ENCODE measurements at regions of chr2 and their contacts with region 1.

Region 1: DNA sequence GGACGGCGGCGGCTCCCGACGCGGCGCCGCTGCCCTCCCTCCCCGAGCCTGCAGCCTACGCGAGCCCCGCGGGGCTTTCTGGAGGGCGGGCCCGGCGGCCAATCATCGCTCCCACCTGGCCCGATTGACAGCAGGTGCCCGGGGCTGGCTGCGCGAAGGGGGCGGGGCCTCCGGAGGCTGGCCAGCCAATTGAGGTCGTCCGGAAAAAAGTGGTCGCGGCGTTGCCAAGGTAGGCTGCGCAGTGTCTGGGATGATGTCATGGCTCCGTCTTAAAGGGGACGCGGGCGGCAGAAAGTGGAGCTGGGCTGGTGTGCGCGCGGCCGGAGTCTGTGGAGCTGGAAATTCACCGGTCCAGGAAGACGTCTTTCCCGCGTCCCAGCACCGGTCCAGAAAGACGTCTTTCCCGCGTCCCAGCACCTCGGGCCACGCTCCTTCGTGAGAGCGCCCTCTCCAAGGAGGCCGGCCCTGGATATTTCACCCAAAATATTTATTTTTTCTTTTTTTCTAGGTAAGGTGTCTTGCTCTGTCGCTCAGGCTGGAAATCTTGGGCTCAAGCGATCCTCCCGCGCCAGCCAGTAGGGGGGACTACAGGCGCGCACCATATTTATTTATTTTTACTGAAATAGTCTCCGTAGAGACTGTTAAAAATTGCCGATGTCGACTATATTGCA is at the start of gene ACTR1B:
- DNase-seq: peak; percentile 98
- ATAC-seq: peak; percentile 91
- H3K4me3 Mint-ChIP-seq: peak within 1 kb of the TSS; percentile 93
- H3K27ac Mint-ChIP-seq: peak within 1 kb of the TSS; percentile 97
- H3K4me1 Mint-ChIP-seq: peaks cover 26% of the 10 kb centered on the region
- H3K27me3 Mint-ChIP-seq: no peaks in the 10 kb centered on the region
- CTCF ChIP-seq: 0 out of 2 replicates have a peak, but pooled peaks have one; percentile 20
- total RNA-seq, gene ACTR1B: 58.2 to 71.8 TPM (median 70.4 TPM) in 3 replicates

Region 2: DNA sequence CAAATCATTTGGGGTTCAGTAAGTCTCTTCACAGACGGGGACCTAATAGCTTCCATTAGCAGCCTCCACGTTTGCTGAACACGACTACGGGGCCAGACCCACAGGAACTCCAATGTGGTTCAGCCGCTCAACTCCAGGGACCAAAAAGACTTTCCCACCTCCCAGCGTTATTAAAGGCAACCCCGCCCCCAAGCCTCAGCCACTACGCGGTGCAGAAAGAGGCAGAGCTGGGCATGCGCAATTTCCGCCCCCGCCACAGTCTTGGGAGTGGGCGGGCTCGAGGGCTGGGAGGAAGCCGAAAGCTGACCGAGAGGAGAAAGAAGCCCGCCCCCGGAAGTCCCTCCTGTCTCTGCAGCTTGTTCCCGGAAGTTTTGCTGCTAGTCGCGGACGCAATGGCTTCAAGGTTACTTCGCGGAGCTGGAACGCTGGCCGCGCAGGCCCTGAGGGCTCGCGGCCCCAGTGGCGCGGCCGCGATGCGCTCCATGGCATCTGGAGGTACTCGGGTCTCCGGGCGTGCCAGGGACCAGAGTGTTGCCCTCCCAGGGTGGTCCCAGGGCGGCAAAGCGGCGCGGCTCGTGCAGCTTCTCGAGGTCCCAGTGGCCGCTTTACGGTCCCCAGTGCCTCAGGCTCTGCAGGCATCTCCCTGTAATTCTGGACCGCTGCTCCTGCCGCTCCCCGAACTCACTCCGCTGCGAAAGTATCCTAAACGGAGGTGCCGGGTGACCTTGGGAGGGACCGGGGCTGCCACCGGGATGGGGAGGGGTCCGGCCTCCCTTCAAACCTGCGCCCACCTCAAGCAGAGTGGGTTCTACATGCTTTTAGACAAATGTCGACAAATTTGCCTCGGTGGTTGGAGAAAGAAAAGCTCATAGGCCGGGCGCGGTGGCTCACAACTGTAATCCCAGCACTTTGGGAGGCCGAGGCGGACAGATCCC is 18.1 kb before region 1 on chr2 and contains the start of gene COX5B:
- CTCF ChIA-PET with region 1: interaction called, 32 read pairs
- POLR2A ChIA-PET with region 1: interaction called, 23 read pairs
- DNase-seq: peak; percentile 99
- ATAC-seq: peak; percentile 98
- H3K4me3 Mint-ChIP-seq: peak within 1 kb of the TSS; percentile 98
- H3K27ac Mint-ChIP-seq: peak within 1 kb of the TSS; percentile 99
- H3K4me1 Mint-ChIP-seq: peaks cover 5% of the 10 kb centered on the region
- H3K27me3 Mint-ChIP-seq: no peaks in the 10 kb centered on the region
- CTCF ChIP-seq: no peak
- total RNA-seq, gene COX5B: 317 to 346 TPM (median 331 TPM) in 3 replicates

Region 3: DNA sequence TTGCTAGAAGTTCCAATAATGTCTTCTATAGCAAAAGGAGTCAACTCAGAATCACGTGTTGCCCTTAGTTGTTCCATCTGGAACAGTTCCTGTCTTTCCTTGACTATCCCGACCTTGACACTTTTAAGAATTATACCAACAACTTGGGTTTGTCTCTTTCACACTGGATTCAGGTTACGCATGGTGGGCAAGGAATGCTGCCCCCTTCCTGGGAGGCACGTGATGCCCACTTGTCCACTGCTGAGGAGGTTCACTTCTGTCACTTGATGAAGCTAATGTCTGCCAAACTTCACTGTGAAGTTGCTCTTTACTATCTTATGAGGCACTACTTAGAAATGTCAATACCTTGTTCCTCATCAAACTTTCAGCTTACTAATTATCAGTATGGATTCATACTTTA is 13.0 kb before region 1 on chr2:
- CTCF ChIA-PET with region 1: interaction called, 32 read pairs
- POLR2A ChIA-PET with region 1: interaction called, 23 read pairs
- DNase-seq: no peak
- ATAC-seq: no peak
- H3K4me3 Mint-ChIP-seq: no peak overlapping the region
- H3K27ac Mint-ChIP-seq: no peak overlapping the region
- H3K4me1 Mint-ChIP-seq: peaks cover 5% of the 10 kb centered on the region
- H3K27me3 Mint-ChIP-seq: no peaks in the 10 kb centered on the region
- CTCF ChIP-seq: no peak

Region 4: GRCh38 chr2:97675430-97676113 is 11.5 kb after region 1 on chr2:
- CTCF ChIA-PET with region 1: interaction called, 12 read pairs
- POLR2A ChIA-PET with region 1: interaction called, 6 read pairs
- DNase-seq: no peak
- ATAC-seq: peak; percentile 85
- H3K4me3 Mint-ChIP-seq: no peak overlapping the region
- H3K27ac Mint-ChIP-seq: peak overlapping the region; percentile 85
- H3K4me1 Mint-ChIP-seq: peaks cover 21% of the 10 kb centered on the region
- H3K27me3 Mint-ChIP-seq: no peaks in the 10 kb centered on the region; the same call in 1 of the 2 replicates
- CTCF ChIP-seq: no peak

Region 5: DNA sequence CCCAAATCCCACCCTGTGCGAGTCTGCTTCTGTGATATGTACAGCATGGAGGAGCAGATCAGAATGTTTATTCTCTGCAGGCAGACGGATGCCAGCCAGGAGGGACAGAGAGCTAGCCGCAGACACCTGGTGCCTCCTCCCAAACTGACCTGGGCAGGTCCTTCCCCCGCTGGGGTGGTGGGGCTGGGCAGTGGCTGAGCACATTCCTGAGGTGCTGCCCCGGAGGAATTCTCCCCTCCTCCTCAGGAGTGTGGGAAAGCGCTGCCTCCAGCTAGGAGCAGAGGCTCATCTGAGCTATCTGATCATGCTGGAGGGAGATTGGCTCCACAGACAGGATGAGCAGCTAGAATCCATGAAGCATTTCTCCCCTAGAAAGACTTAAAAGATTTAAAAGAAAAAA is 27.1 kb after region 1 on chr2:
- CTCF ChIA-PET with region 1: interaction called, 99 read pairs
- POLR2A ChIA-PET with region 1: interaction called, 4 read pairs
- DNase-seq: peak; percentile 77
- ATAC-seq: peak; percentile 97
- H3K4me3 Mint-ChIP-seq: no peak overlapping the region
- H3K27ac Mint-ChIP-seq: peak overlapping the region; percentile 84
- H3K4me1 Mint-ChIP-seq: peaks cover 29% of the 10 kb centered on the region
- H3K27me3 Mint-ChIP-seq: no peaks in the 10 kb centered on the region
- CTCF ChIP-seq: no peak

Region 6: GRCh38 chr2:98308068-98308467 is 644.0 kb after region 1 on chr2:
- CTCF ChIA-PET with region 1: no interaction called
- POLR2A ChIA-PET with region 1: no interaction called
- DNase-seq: no peak
- ATAC-seq: no peak
- H3K4me3 Mint-ChIP-seq: no peak overlapping the region
- H3K27ac Mint-ChIP-seq: no peak overlapping the region
- H3K4me1 Mint-ChIP-seq: peaks cover 6% of the 10 kb centered on the region
- H3K27me3 Mint-ChIP-seq: 0 out of 2 replicates have a peak, but pooled peaks cover 2% of the 10 kb centered on the region
- CTCF ChIP-seq: no peak

Measured in WTC11 (cell line).